A673 (cell line): ENCODE measurements at regions of chr2 and their contacts with region 1.

Region 1: DNA sequence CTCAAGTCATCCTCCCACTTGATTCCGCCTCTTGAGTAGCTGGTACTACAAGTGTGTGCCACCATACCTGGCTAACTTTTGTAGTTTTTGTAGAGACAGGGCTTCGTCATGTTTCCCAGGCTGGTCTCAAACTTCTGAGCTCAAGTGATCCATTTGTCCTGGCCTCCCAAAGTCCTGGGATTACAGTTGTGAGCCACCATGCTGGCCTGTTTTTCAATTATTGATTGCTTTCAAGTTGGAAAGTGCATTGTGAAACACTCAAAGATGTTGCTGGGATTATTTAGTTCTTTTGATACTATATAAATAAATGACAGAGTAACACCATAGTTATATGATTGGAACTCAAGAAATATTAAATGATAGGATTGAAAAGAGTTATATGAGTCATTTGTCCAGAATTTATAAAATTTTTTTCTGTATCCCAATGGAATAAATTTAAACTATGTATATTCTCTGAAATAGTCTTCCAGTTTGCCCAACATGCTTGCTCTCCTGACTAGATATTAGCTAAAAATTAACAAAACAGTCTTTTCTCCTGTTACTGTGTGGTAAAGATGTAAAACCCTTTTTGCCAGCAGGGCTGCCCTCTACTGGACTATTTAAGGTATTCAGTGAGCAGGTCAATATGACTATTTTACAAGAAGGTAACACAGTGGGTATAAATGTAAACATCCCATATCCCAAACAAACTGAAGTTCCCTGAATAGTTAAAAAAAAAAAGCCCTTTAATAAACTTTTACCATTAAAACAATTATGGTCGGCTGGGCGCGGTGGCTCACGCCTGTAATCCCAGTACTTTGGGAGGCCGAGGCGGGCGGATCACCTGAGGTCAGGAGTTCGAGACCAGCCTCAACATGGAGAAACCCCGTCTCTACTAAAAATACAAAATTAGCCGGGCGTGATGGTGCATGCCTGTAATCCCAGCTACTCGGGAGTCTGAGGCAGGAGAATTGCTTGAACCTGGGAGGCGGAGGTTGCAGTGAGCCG is 42.7 kb downstream of the ACSL3 start:
- DNase-seq: peak; percentile 73
- H3K4me3 ChIP-seq: no peak overlapping the region
- H3K27ac ChIP-seq: no peak overlapping the region
- H3K4me1 ChIP-seq: peaks cover 52% of the 10 kb centered on the region
- H3K27me3 ChIP-seq: no peaks in the 10 kb centered on the region
- CTCF ChIP-seq: peak; percentile 73

Region 2: GRCh38 chr2:222690564-222691200 is 212.8 kb before region 1 on chr2:
- CTCF ChIA-PET with region 1: interaction called, 6 read pairs
- POLR2A ChIA-PET with region 1: no interaction called
- intact Hi-C with region 1: loop called (anchors 5 kb)
- DNase-seq: peak; percentile 89
- H3K4me3 ChIP-seq: no peak overlapping the region
- H3K27ac ChIP-seq: no peak overlapping the region
- H3K4me1 ChIP-seq: peaks cover 15% of the 10 kb centered on the region
- H3K27me3 ChIP-seq: no peaks in the 10 kb centered on the region
- CTCF ChIP-seq: peak; percentile 100

Region 3: GRCh38 chr2:222707689-222708525 is 195.6 kb before region 1 on chr2:
- CTCF ChIA-PET with region 1: interaction called, 25 read pairs
- POLR2A ChIA-PET with region 1: interaction called, 4 read pairs
- intact Hi-C with region 1: loop called (anchors 1 kb)
- DNase-seq: peak; percentile 81
- H3K4me3 ChIP-seq: no peak overlapping the region
- H3K27ac ChIP-seq: no peak overlapping the region
- H3K4me1 ChIP-seq: peaks cover 21% of the 10 kb centered on the region
- H3K27me3 ChIP-seq: no peaks in the 10 kb centered on the region
- CTCF ChIP-seq: peak; percentile 92

Region 4: DNA sequence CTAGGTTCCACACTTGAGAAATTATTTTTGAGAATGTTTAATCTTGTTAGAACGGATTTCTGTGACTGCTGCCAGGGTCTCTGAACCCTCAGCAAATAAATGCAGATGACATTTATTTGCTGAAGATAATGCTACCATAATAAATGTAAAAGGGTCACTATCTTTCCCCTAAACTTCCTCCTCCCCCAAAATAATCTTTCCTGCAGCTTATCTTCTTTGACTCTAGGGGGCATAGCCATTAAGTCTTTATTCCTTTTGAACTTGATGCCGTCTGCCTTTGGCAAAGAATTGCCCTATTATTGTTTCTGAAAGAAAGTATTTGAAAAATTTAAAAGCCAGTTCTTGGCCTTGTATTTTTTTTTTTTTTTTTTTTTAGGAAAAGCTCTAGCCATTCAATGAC is 106.3 kb before region 1 on chr2:
- CTCF ChIA-PET with region 1: interaction called, 13 read pairs
- POLR2A ChIA-PET with region 1: no interaction called
- intact Hi-C with region 1: loop called (anchors 5 kb)
- DNase-seq: peak; percentile 66
- H3K4me3 ChIP-seq: no peak overlapping the region
- H3K27ac ChIP-seq: no peak overlapping the region
- H3K4me1 ChIP-seq: peaks cover 27% of the 10 kb centered on the region
- H3K27me3 ChIP-seq: no peaks in the 10 kb centered on the region
- CTCF ChIP-seq: peak; percentile 74

Region 5: GRCh38 chr2:223062396-223062795 is 158.9 kb after region 1 on chr2:
- CTCF ChIA-PET with region 1: no interaction called
- POLR2A ChIA-PET with region 1: no interaction called
- intact Hi-C with region 1: no loop called
- DNase-seq: peak; percentile 93
- H3K4me3 ChIP-seq: no peak overlapping the region
- H3K27ac ChIP-seq: peak overlapping the region; percentile 56
- H3K4me1 ChIP-seq: peaks cover 83% of the 10 kb centered on the region
- H3K27me3 ChIP-seq: no peaks in the 10 kb centered on the region
- CTCF ChIP-seq: no peak

Region 6: GRCh38 chr2:223161873-223162458 is 258.4 kb after region 1 on chr2:
- CTCF ChIA-PET with region 1: no interaction called
- POLR2A ChIA-PET with region 1: no interaction called
- intact Hi-C with region 1: no loop called
- DNase-seq: no peak
- H3K4me3 ChIP-seq: no peak overlapping the region
- H3K27ac ChIP-seq: no peak overlapping the region
- H3K4me1 ChIP-seq: no peaks in the 10 kb centered on the region
- H3K27me3 ChIP-seq: no peaks in the 10 kb centered on the region
- CTCF ChIP-seq: no peak